ENCODE measurements at regions of chrX and their contacts with region 1.

Region 1: DNA sequence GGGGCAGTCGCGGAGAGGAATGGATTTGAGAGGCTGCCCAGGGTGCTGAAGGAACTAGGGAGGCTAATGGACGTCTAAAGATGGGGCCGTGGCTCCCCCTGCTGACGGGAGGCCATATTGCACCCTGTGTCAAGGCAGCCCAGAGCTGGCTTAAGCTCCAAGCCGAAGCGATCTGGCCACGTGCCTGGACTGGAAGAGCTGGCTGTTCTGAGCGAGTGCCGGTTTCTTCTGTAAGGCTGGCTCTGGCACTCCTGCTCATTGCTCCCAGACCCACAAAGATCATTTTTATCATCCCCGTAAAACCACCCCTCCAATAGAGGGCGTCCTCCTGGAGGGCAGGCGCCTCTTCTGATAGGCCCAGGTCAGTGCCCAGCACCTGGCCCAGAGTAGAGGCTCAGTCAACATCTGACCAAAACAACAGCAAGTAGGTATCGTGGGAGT is 5.6 kb downstream of the PNCK start:
- DNase-seq: peak; percentile 89
- ATAC-seq: peak; percentile 93
- H3K4me3 Mint-ChIP-seq: peak overlapping the region; percentile 69
- H3K27ac Mint-ChIP-seq: no peak overlapping the region
- H3K4me1 Mint-ChIP-seq: peaks cover 2% of the 10 kb centered on the region
- H3K27me3 Mint-ChIP-seq: peaks cover 15% of the 10 kb centered on the region
- CTCF ChIP-seq: peak; percentile 65

Region 2: GRCh38 chrX:152941328-152942106 is 726.5 kb before region 1 on chrX:
- CTCF ChIA-PET with region 1: interaction called, 14 read pairs
- POLR2A ChIA-PET with region 1: no interaction called
- intact Hi-C with region 1: no loop called
- DNase-seq: peak; percentile 91
- ATAC-seq: peak; percentile 99
- H3K4me3 Mint-ChIP-seq: peak overlapping the region; percentile 86
- H3K27ac Mint-ChIP-seq: peak overlapping the region; percentile 85
- H3K4me1 Mint-ChIP-seq: no peaks in the 10 kb centered on the region
- H3K27me3 Mint-ChIP-seq: no peaks in the 10 kb centered on the region
- CTCF ChIP-seq: peak; percentile 60

Region 3: DNA sequence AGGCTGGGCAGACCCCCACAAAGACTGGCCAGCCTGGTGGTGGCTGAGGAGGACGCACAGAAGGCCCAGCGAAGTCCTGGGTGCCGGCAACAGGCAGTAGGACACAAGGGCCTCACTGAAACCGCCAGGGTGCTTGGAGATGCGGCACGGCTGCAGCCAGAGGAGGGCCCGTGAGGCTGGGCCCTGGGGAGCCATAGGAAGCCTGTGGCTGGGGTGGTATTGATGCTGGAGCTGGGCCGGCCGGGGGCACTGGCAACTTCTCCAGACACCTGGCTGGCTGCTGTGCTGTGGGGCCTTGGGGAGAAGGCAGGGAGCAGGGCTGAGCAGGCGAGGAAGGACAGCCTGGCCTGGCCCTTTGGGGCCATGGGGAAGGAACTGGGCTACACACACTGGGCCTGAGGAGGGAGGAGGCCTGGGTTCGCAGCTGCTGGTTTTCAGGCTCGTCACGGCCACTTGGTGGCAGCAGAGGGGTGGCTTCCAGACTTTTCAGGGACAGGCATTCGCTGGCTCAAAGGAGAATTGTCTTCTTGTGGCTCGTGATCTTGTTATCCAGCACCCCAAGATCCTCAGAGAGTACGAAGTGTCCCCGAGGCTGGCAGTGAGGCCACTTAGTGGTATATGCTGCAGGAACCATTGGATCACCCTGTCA is 113.3 kb before region 1 on chrX:
- CTCF ChIA-PET with region 1: interaction called, 42 read pairs
- POLR2A ChIA-PET with region 1: no interaction called
- intact Hi-C with region 1: no loop called
- DNase-seq: peak; percentile 74
- ATAC-seq: peak; percentile 70
- H3K4me3 Mint-ChIP-seq: no peak overlapping the region
- H3K27ac Mint-ChIP-seq: no peak overlapping the region
- H3K4me1 Mint-ChIP-seq: no peaks in the 10 kb centered on the region
- H3K27me3 Mint-ChIP-seq: no peaks in the 10 kb centered on the region
- CTCF ChIP-seq: peak; percentile 41

Region 4: DNA sequence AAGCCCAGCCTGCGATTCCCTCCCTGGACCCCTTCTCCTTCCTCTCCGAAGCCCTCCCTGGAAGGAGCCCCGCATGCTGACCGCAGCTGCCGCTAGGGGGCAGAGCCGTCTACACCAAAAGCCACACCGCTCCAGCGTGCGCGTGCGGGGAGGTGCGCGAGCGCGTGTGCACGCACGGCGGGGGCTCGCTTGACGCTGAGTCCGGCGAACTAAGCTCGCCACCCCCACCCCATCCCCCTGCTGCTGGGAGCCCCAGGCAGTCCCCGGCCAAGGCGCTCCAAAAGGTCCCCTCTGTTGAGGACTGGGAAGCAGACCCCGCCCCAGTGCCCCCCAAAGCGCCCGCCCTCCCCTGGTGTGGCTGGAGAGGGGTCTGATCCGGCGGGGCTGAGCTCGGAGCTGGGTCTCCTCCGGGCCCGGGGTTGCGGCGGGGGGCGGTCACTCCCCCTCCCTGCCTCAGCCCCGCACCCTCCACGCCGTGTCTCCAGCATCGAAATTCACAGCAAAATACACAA is 58.0 kb before region 1 on chrX:
- CTCF ChIA-PET with region 1: interaction called, 27 read pairs
- POLR2A ChIA-PET with region 1: interaction called, 3 read pairs
- intact Hi-C with region 1: loop called (anchors 10 kb)
- DNase-seq: peak; percentile 81
- ATAC-seq: peak; percentile 94
- H3K4me3 Mint-ChIP-seq: peak overlapping the region; percentile 60
- H3K27ac Mint-ChIP-seq: no peak overlapping the region
- H3K4me1 Mint-ChIP-seq: peaks cover 4% of the 10 kb centered on the region
- H3K27me3 Mint-ChIP-seq: no peaks in the 10 kb centered on the region
- CTCF ChIP-seq: peak; percentile 66

Region 5: GRCh38 chrX:153657161-153657560 is 10.8 kb before region 1 on chrX:
- CTCF ChIA-PET with region 1: interaction called, 29 read pairs
- POLR2A ChIA-PET with region 1: no interaction called
- intact Hi-C with region 1: no loop called
- DNase-seq: no peak
- ATAC-seq: no peak
- H3K4me3 Mint-ChIP-seq: no peak overlapping the region
- H3K27ac Mint-ChIP-seq: no peak overlapping the region
- H3K4me1 Mint-ChIP-seq: no peaks in the 10 kb centered on the region
- H3K27me3 Mint-ChIP-seq: no peaks in the 10 kb centered on the region
- CTCF ChIP-seq: no peak

Measured in activated CD8-positive, alpha-beta T cell treated with anti-CD3 and anti-CD28 coated beads for 36 hours (primary cell).